Activated CD4-positive, alpha-beta memory T cell treated with anti-CD3 and anti-CD28 coated beads for 36 hours (primary cell): ENCODE measurements at regions of chr6 and their contacts with region 1.

Region 1: GRCh38 chr6:149723771-149724417 is 6.0 kb upstream of the LATS1 start:
- DNase-seq: peak; percentile 47
- H3K4me3 Mint-ChIP-seq: no peak overlapping the region
- H3K27ac Mint-ChIP-seq: no peak overlapping the region
- H3K4me1 Mint-ChIP-seq: peaks cover 13% of the 10 kb centered on the region
- H3K27me3 Mint-ChIP-seq: no peaks in the 10 kb centered on the region

Region 2: DNA sequence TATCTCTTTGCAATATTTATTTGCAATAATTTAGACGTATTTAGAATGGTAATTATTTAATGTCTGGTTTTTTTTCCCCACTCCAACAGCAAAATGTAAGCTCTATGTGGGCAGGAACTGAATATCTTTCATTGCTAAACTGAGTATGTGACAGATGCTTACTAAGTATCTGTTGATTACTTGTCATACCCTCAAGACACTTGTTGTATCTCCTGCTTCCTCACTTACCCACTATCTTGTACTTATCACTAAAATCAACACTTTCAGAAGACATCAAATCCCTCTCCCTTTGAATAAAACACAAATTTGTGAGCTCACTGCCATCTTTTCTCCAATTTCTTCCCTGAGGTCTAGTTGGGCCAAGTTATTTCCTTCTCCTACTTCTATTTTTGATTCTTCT is 208.4 kb before region 1 on chr6:
- CTCF ChIA-PET with region 1: no interaction called
- POLR2A ChIA-PET with region 1: no interaction called
- intact Hi-C with region 1: no loop called
- DNase-seq: no peak
- H3K4me3 Mint-ChIP-seq: no peak overlapping the region
- H3K27ac Mint-ChIP-seq: peak overlapping the region; percentile 69
- H3K4me1 Mint-ChIP-seq: peaks cover 53% of the 10 kb centered on the region
- H3K27me3 Mint-ChIP-seq: no peaks in the 10 kb centered on the region

Region 3: GRCh38 chr6:149815788-149816187 is 91.9 kb after region 1 on chr6:
- CTCF ChIA-PET with region 1: no interaction called
- POLR2A ChIA-PET with region 1: no interaction called
- intact Hi-C with region 1: loop called (anchors 10 kb)
- DNase-seq: no peak
- H3K4me3 Mint-ChIP-seq: no peak overlapping the region
- H3K27ac Mint-ChIP-seq: no peak overlapping the region
- H3K4me1 Mint-ChIP-seq: peaks cover 2% of the 10 kb centered on the region
- H3K27me3 Mint-ChIP-seq: no peaks in the 10 kb centered on the region